T-cell (primary cell): ENCODE measurements at regions of chr5 and their contacts with region 1.

Region 1: GRCh38 chr5:159209438-159210305 is at the start of gene RNF145:
- DNase-seq: peak; percentile 87 to 96 (median 92)
- ATAC-seq: peak; percentile 78 to 80 (median 78)
- H3K4me3 ChIP-seq: peak within 1 kb of the TSS; percentile 90 to 99
- H3K4me3 Mint-ChIP-seq: peak within 1 kb of the TSS; percentile 89 to 99 (median 95)
- H3K27ac ChIP-seq: peak within 1 kb of the TSS; percentile 95
- H3K27ac Mint-ChIP-seq: peak within 1 kb of the TSS; percentile 95 to 99
- H3K4me1 ChIP-seq: peaks cover 9 to 34% of the 10 kb centered on the region in 2 experiments
- H3K4me1 Mint-ChIP-seq: peaks cover 42 to 62% (median 45%) of the 10 kb centered on the region in 3 donors
- H3K27me3 ChIP-seq: no peaks in the 10 kb centered on the region
- H3K27me3 Mint-ChIP-seq: no peaks in the 10 kb centered on the region
- total RNA-seq, gene RNF145: 54.0 to 62.8 (median 60.1) TPM

Region 2: GRCh38 chr5:159175547-159175946 is 34.1 kb before region 1 on chr5:
- CTCF ChIA-PET with region 1: interaction called in 1 of 2 experiments, 12 read pairs
- POLR2A ChIA-PET with region 1: interaction called, 4 to 7 read pairs
- DNase-seq: peak in 2 of 35 experiments; percentile 1 to 56
- ATAC-seq: peak; percentile 78 to 83 (median 80)
- H3K4me3 ChIP-seq: peak overlapping the region in 1 of 2 donors; percentile 15
- H3K4me3 Mint-ChIP-seq: peak overlapping the region in 2 of 3 donors; percentile 50 to 53
- H3K27ac ChIP-seq: peak overlapping the region; percentile 35
- H3K27ac Mint-ChIP-seq: peak overlapping the region; percentile 79 to 90
- H3K4me1 ChIP-seq: peaks cover 5 to 27% of the 10 kb centered on the region in 2 experiments
- H3K4me1 Mint-ChIP-seq: peaks cover 50 to 65% (median 59%) of the 10 kb centered on the region in 3 donors
- H3K27me3 ChIP-seq: no peaks in the 10 kb centered on the region
- H3K27me3 Mint-ChIP-seq: no peaks in the 10 kb centered on the region

Region 3: DNA sequence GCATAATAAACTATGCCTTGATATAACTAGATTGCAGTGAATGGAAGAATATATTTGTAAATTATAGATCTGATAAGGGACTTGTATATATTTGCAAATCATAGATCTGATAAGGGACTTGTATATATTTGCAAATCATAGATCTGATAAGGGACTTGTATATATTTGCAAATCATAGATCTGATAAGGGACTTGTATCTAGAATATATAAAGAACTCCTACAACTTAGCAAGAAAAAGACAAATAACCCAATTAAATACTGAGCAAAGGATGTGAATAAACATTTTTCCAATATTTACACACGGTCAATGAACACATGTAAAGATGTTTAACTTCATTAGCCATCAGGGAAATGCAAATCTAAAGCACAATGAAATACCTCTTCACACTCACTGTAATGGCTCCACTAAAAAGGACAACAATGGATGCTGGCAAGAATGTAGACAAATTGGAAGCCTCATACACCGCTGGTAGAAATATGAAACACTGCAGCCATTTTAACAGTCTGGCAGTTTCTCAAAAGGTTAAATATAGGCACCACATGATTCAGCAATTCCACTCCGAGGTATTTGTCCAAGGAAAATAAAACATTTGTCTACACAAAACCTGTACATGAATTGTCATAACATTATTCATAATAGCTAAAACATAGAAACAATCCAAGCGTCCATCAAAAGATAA is 20.5 kb before region 1 on chr5:
- CTCF ChIA-PET with region 1: interaction called in 1 of 2 experiments, 6 read pairs
- POLR2A ChIA-PET with region 1: interaction called in 1 of 2 experiments, 10 read pairs
- DNase-seq: no peak
- ATAC-seq: no peak
- H3K4me3 ChIP-seq: no peak overlapping the region
- H3K4me3 Mint-ChIP-seq: no peak overlapping the region
- H3K27ac ChIP-seq: no peak overlapping the region
- H3K27ac Mint-ChIP-seq: no peak overlapping the region
- H3K4me1 ChIP-seq: peaks cover 0 to 5% of the 10 kb centered on the region in 2 experiments
- H3K4me1 Mint-ChIP-seq: peaks cover 43 to 63% (median 57%) of the 10 kb centered on the region in 3 donors
- H3K27me3 ChIP-seq: no peaks in the 10 kb centered on the region
- H3K27me3 Mint-ChIP-seq: no peaks in the 10 kb centered on the region

Region 4: GRCh38 chr5:159198063-159199036 is 11.3 kb before region 1 on chr5:
- CTCF ChIA-PET with region 1: interaction called in 1 of 2 experiments, 11 read pairs
- POLR2A ChIA-PET with region 1: interaction called, 5 read pairs
- DNase-seq: peak in 1 of 35 experiments; percentile 57
- ATAC-seq: peak; percentile 77 to 94 (median 88)
- H3K4me3 ChIP-seq: no peak overlapping the region
- H3K4me3 Mint-ChIP-seq: peak overlapping the region in 2 of 3 donors; percentile 5 to 34
- H3K27ac ChIP-seq: peak overlapping the region; percentile 30
- H3K27ac Mint-ChIP-seq: peak overlapping the region; percentile 47 to 78
- H3K4me1 ChIP-seq: peaks cover 24 to 32% of the 10 kb centered on the region in 2 experiments
- H3K4me1 Mint-ChIP-seq: peaks cover 76 to 79% (median 79%) of the 10 kb centered on the region in 3 donors
- H3K27me3 ChIP-seq: no peaks in the 10 kb centered on the region
- H3K27me3 Mint-ChIP-seq: no peaks in the 10 kb centered on the region

Region 5: DNA sequence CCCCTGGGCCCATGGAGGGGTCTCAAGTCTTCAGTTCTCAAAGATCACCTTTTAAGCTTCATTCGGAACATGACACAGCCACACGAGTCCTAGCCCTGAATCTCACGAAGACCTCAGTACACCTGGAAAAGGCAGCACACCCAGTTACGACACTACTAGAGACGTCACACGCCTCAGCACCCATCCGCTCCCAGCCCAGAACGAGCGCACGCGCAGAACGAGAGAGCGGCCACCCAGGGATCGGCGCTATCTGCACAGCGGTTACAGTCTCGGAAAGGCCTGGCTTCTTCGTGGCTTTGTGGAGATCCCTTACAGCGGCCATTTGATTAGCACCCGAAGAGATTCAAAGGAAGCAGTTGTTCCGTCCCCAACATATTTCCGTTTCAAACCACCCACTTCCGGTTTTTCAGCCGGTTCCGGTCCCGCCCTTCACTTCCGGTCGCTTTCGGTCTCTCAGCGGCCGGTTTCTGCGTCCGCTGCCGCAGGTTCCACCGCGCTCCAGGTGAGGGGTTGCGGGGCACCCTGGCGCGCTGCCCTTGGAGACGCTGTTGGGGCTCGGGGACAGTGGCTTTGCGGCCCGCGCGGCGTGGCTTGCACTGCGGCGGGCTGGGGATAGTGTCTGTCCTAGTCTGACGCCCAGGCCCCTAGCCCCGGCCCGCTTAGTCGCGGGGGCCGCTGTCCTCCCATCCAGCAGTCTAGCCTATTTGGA is 53.3 kb after region 1 on chr5 and contains the start of gene UBLCP1:
- CTCF ChIA-PET with region 1: interaction called in 1 of 2 experiments, 9 read pairs
- POLR2A ChIA-PET with region 1: interaction called in 1 of 2 experiments, 16 read pairs
- DNase-seq: peak; percentile 58 to 89 (median 75)
- ATAC-seq: peak; percentile 86 to 89 (median 86)
- H3K4me3 ChIP-seq: peak within 1 kb of the TSS; percentile 82 to 99
- H3K4me3 Mint-ChIP-seq: peak within 1 kb of the TSS; percentile 93 to 99 (median 98)
- H3K27ac ChIP-seq: peak within 1 kb of the TSS; percentile 86
- H3K27ac Mint-ChIP-seq: peak within 1 kb of the TSS; percentile 99 to 100
- H3K4me1 ChIP-seq: peaks cover 6 to 13% of the 10 kb centered on the region in 2 experiments
- H3K4me1 Mint-ChIP-seq: peaks cover 49 to 56% (median 55%) of the 10 kb centered on the region in 3 donors
- H3K27me3 ChIP-seq: no peaks in the 10 kb centered on the region
- H3K27me3 Mint-ChIP-seq: no peaks in the 10 kb centered on the region
- total RNA-seq, gene UBLCP1: 22.3 to 29.4 (median 27.4) TPM